Naive thymus-derived CD4-positive, alpha-beta T cell (primary cell): ENCODE measurements at regions of chr21 and their contacts with region 1.

Region 1: DNA sequence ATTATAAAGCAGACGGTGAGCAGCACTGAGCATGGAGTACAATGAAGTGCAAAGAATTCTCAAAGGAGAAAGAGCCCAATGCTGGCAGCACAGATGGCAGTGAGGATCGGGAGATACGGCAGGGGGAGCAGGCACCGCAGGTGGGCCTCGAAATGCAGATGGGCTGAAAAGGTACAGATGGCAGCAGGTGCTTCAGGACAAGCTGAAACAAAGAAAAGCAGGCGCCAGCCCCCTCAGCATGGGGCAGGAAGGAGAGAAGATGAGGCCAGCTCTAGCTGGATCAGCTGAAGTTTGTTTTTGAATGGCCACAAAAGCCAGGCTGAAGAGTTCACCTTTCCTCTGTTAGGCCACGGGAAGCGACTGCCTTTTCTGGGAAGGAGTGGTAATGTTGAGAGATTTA is 7.7 kb downstream of the CFAP298 start:
- DNase-seq: no peak
- ATAC-seq: no peak
- H3K4me3 ChIP-seq: no peak overlapping the region
- H3K4me3 Mint-ChIP-seq: no peak overlapping the region
- H3K27ac ChIP-seq: no peak overlapping the region
- H3K27ac Mint-ChIP-seq: peak overlapping the region in 1 of 9 donors; percentile 21
- H3K4me1 ChIP-seq: no peaks in the 10 kb centered on the region
- H3K4me1 Mint-ChIP-seq: peaks cover 2 to 25% (median 15%) of the 10 kb centered on the region in 7 donors
- H3K27me3 ChIP-seq: no peaks in the 10 kb centered on the region
- H3K27me3 Mint-ChIP-seq: no peaks in the 10 kb centered on the region

Region 2: DNA sequence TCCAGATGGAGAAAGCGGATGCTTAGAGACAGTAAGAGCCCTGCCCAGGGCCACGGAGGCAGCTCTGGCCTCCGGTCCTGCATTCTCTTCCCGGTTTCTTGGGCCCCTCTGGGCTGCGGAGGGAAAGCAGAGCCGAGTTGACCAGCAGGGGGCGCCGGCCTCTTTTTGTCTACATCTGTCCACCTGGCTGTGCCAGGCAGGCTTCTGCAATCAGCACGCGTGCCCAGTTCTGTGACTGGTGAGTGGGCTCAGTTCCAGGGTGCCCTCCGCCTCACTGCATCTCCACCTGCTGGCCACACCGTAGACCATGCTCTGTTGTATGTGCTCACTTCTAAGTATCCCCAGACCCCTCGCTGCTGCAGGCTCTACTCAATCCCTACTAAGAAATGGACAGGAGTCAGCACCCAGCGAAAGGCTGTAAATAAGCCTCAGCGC is 738.4 kb before region 1 on chr21:
- CTCF ChIA-PET with region 1: no interaction called
- POLR2A ChIA-PET with region 1: no interaction called
- intact Hi-C with region 1: loop called in 1 of 2 experiments (anchors 10 kb)
- DNase-seq: peak; percentile 16 to 70 (median 47)
- ATAC-seq: peak; percentile 72
- H3K4me3 ChIP-seq: no peak overlapping the region
- H3K4me3 Mint-ChIP-seq: no peak overlapping the region
- H3K27ac ChIP-seq: no peak overlapping the region
- H3K27ac Mint-ChIP-seq: no peak overlapping the region
- H3K4me1 ChIP-seq: no peaks in the 10 kb centered on the region
- H3K4me1 Mint-ChIP-seq: no peaks in the 10 kb centered on the region
- H3K27me3 ChIP-seq: no peaks in the 10 kb centered on the region
- H3K27me3 Mint-ChIP-seq: peaks cover 13 to 30% (median 23%) of the 10 kb centered on the region in 5 donors

Region 3: DNA sequence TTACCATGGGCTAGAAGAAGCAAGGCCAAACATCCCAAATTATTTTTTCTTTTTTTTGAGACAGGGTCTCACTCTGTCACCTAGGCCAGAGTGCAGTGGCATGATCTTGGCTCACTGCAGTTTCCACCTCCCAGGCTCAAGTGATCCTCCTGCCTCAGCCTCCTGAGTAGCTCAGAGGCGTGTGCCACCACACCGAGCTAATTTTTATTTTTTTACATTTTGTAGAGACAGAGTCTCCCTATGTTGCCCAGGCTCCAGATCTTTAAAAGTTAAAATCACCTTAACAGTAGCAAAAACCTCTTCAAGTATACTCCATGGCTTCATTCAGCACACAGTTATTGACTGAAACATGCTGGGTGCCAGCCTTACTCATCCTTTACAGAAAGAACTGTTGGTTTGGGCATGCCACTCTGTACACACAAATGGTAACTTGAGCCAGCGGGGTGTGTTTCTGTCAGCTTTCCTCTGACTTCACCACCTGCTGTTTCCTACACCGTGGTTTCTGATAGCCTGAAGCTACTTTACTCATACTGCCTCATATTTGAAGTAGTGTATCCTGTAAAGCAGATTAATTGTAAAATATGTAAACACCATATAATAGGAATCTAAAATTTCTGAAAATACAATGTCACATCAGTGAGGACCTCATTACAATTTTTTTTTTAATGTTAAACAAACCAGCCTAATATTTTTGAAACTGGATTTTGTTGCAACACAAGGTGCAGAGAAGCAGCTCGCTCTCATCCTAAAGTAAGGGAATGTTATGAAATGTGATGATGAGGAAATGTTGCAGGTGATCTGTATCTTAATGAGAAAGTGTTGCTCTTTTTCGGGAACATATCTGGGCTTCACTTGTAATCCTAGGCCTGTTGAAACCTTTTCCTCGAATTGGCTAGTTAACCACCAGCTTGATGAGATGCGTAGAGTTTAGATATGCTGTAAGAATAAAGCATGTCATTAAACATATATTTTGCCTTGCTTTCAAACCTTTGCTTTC is 1197.3 kb after region 1 on chr21:
- CTCF ChIA-PET with region 1: no interaction called
- POLR2A ChIA-PET with region 1: no interaction called
- intact Hi-C with region 1: no loop called
- DNase-seq: no peak
- ATAC-seq: no peak
- H3K4me3 ChIP-seq: no peak overlapping the region
- H3K4me3 Mint-ChIP-seq: no peak overlapping the region
- H3K27ac ChIP-seq: no peak overlapping the region
- H3K27ac Mint-ChIP-seq: no peak overlapping the region
- H3K4me1 ChIP-seq: no peaks in the 10 kb centered on the region
- H3K4me1 Mint-ChIP-seq: peaks cover 0 to 2% (median 0%) of the 10 kb centered on the region in 7 donors
- H3K27me3 ChIP-seq: no peaks in the 10 kb centered on the region
- H3K27me3 Mint-ChIP-seq: no peaks in the 10 kb centered on the region